ENCODE measurements at regions of chr2 and their contacts with region 1.

Region 1: GRCh38 chr2:113370478-113371091 is 66.9 kb upstream of the ZNG1B start:
- DNase-seq: peak; percentile 64
- H3K4me3 ChIP-seq: no peak overlapping the region
- H3K27ac ChIP-seq: no peak overlapping the region
- H3K4me1 ChIP-seq: no peaks in the 10 kb centered on the region
- H3K27me3 ChIP-seq: no peaks in the 10 kb centered on the region
- CTCF ChIP-seq: peak in 3 of 4 experiments; percentile 64 to 91 (median 84)
- POLR2A ChIP-seq: no peak

Region 2: DNA sequence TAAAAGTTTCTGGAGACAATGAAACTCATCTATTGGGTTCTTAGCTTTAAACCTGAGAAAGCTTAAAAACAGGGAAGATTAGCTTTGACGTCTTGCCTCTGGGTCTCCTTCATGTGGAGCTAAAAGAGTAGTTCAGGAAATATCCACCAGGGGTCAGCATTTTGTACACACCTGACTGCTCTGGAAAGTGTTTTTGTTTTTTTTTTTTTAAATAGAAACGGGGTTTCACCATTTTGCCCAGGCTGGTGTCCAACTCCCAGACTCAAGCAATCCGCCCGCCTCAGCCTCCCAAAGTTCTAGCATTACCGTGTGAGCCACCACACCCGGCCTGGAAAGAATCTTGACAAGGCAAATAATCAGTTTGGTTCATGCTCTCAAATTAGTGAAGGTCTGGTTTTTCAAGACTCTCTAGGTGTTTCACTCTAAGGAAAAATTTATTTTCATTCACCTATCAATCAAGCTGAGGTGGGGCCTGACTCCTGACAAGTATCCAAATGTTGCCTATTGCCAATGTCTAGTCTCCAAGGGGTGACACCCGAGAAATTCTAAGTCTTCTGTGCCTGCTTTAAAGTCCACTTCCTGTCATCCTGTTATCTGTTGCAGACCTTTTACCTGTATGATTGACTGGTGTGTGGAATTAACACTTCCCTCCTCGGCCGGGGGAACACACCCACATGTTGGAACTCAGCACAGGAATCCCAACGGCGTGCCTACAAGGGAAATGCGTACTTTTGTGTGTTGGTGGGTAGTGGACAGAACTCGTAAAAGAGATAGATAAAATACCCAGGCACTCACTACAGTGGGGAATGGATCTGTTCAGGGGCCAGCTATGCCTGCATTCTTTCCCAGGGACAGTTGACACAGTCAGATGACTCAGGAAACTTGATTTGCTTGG is 231.9 kb before region 1 on chr2:
- intact Hi-C with region 1: loop called (anchors 5 kb)
- DNase-seq: peak; percentile 75
- H3K4me3 ChIP-seq: no peak overlapping the region
- H3K27ac ChIP-seq: peak overlapping the region; percentile 17 to 36
- H3K4me1 ChIP-seq: no peaks in the 10 kb centered on the region
- H3K27me3 ChIP-seq: no peaks in the 10 kb centered on the region
- CTCF ChIP-seq: peak; percentile 75 to 85 (median 77)
- POLR2A ChIP-seq: no peak

Region 3: GRCh38 chr2:113203901-113204519 is 166.6 kb before region 1 on chr2:
- intact Hi-C with region 1: loop called (anchors 5 kb)
- DNase-seq: peak; percentile 42
- H3K4me3 ChIP-seq: no peak overlapping the region
- H3K27ac ChIP-seq: no peak overlapping the region
- H3K4me1 ChIP-seq: no peaks in the 10 kb centered on the region
- H3K27me3 ChIP-seq: no peaks in the 10 kb centered on the region
- CTCF ChIP-seq: peak; percentile 44 to 90 (median 62)
- POLR2A ChIP-seq: no peak

Region 4: GRCh38 chr2:113248997-113249770 is 121.4 kb before region 1 on chr2:
- intact Hi-C with region 1: loop called (anchors 2 kb)
- DNase-seq: peak; percentile 75
- H3K4me3 ChIP-seq: no peak overlapping the region
- H3K27ac ChIP-seq: no peak overlapping the region
- H3K4me1 ChIP-seq: no peaks in the 10 kb centered on the region
- H3K27me3 ChIP-seq: no peaks in the 10 kb centered on the region
- CTCF ChIP-seq: peak; percentile 75 to 92 (median 88)
- POLR2A ChIP-seq: no peak